ENCODE measurements at regions of chr6 and their contacts with region 1.

Region 1: DNA sequence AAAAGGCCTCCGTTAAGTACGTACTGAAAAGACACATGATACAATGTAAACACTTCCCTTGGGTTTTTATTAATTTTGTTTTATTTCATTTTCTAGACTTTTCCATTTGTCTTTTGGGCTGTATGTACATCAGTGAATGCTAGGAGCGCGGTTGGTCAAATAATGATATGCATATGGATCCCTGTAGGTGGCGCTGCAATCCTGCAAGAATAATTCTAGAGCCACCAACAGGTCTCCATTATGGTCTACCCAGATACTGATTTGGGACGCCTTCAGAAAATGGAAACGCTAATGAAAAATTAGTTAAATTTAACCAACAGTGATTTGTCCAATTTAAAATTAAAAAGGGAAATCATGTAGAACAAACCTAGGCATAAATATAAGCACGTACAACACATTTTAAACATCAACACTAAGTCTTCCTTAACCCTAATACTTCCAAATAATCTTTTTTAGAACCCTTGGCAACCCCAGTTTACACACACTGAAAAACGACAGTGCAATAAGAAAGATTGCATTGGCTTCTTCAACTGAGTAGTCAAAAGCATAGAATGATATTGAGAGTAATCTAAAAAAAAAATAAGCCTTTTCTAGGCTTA is 433.5 kb downstream of the RFPL4B start:
- DNase-seq: peak; percentile 40 to 63 (median 57)
- H3K4me3 ChIP-seq: no peak overlapping the region
- H3K4me3 Mint-ChIP-seq: no peak overlapping the region
- H3K27ac ChIP-seq: no peak overlapping the region
- H3K27ac Mint-ChIP-seq: no peak overlapping the region
- H3K4me1 ChIP-seq: no peaks in the 10 kb centered on the region
- H3K4me1 Mint-ChIP-seq: no peaks in the 10 kb centered on the region
- H3K27me3 ChIP-seq: no peaks in the 10 kb centered on the region
- H3K27me3 Mint-ChIP-seq: peaks cover 0 to 3% (median 0%) of the 10 kb centered on the region in 3 donors
- CTCF ChIP-seq: peak; percentile 88

Region 2: DNA sequence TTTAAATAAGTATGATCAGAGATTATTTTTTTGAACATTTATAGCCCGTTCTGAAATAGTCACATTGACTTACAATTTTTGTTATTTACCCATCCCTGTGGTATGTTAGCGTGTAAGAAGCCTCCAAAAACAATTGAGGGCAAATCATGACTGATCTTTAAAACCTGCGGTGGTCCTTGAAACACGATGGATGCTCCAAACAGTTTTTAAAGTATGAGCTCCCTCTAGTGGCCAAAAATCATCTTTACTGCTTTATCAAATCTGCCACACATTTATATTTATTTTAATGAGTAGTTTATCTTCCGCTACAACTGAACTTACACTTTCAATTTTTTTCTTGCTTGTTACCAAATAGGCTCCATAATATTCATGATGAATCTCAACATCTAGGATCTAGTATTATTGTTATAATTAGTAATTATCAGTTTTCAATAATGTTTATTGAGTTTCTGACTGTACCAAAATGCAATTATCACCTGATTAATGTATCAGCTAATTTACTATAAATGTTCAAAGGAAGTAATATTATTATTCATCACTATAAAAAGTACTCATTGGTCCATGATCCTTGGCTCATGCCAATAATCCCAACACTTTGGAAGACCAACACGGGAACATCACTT is 1128.7 kb after region 1 on chr6:
- intact Hi-C with region 1: loop called (anchors 5 to 10 kb)
- DNase-seq: peak; percentile 8 to 55 (median 41)
- H3K4me3 ChIP-seq: no peak overlapping the region
- H3K4me3 Mint-ChIP-seq: no peak overlapping the region
- H3K27ac ChIP-seq: no peak overlapping the region
- H3K27ac Mint-ChIP-seq: no peak overlapping the region
- H3K4me1 ChIP-seq: no peaks in the 10 kb centered on the region
- H3K4me1 Mint-ChIP-seq: peaks cover 2% of the 10 kb centered on the region
- H3K27me3 ChIP-seq: no peaks in the 10 kb centered on the region
- H3K27me3 Mint-ChIP-seq: peaks cover 0 to 1% (median 0%) of the 10 kb centered on the region in 3 donors
- CTCF ChIP-seq: peak; percentile 79

Region 3: DNA sequence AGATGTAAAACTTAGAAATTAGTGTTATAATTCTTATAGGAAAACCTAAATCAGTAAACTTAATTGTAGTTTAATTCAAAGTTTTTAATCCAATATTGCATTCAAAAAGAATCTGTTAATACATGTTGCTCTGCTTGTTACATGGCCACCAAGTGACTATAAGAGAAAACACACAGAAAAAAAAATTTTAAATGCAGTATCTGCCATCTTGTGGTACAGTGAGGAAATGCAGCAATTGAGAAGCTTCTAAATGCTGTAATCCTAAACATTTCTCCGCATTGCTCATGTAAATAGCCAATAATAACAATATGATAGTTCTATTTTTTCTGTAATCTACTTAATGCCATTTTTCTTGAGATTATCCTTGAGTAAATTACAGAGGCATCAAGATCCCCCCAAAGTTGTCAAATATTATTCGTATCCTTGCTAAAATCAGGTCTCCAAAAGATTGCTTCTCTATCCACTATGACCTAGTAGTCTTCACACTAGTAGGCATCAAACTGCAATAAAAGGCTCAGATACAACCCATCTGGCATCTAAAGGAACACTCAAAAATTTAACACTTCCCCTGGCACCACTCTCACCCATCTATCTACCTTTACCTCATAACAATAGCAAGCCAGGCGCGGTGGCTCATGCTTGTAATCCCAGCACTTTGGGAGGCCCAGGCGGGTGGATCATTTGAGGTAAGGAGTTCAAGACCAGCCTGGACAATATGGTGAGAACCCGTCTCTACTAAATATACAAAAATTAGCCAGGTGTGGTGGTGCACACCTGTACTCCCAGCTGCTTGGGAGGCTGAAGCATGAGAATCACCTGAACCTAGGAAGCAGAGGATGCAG is 1155.7 kb after region 1 on chr6:
- intact Hi-C with region 1: loop called in 1 of 2 experiments (anchors 10 kb)
- DNase-seq: peak; percentile 8 to 45 (median 26)
- H3K4me3 ChIP-seq: no peak overlapping the region
- H3K4me3 Mint-ChIP-seq: no peak overlapping the region
- H3K27ac ChIP-seq: no peak overlapping the region
- H3K27ac Mint-ChIP-seq: peak overlapping the region in 1 of 7 donors; percentile 25
- H3K4me1 ChIP-seq: no peaks in the 10 kb centered on the region
- H3K4me1 Mint-ChIP-seq: no peaks in the 10 kb centered on the region
- H3K27me3 ChIP-seq: no peaks in the 10 kb centered on the region
- H3K27me3 Mint-ChIP-seq: no peaks in the 10 kb centered on the region
- CTCF ChIP-seq: peak; percentile 91

Measured in CD14-positive monocyte (primary cell).